ENCODE measurements at regions of chr15 and their contacts with region 1.

Region 1: DNA sequence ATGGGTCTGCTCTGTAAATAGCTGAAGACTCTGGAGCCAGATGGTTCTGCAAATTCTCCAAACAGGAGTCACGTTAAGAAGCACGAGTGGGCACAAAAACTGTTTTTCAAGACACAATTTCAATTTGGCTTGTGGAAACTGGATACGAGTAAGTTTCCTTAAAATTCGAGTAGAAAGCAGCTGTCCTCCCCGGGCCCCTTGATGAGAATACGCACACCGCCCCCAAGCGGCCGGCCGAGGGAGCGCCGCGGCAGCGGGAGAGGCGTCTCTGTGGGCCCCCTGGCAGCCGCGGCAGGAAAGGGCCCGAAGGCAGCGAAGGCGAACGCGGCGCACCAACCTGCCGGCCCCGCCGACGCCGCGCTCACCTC is 778 bp upstream of the THBS1 start:
- DNase-seq: peak; percentile 89
- H3K4me3 Mint-ChIP-seq: peak overlapping the region; percentile 42
- H3K27ac Mint-ChIP-seq: no peak overlapping the region
- H3K4me1 Mint-ChIP-seq: peaks cover 22% of the 10 kb centered on the region
- H3K27me3 Mint-ChIP-seq: peaks cover 67% of the 10 kb centered on the region

Region 2: GRCh38 chr15:39312984-39313383 is 267.1 kb before region 1 on chr15:
- CTCF ChIA-PET with region 1: no interaction called
- POLR2A ChIA-PET with region 1: no interaction called
- DNase-seq: no peak
- H3K4me3 Mint-ChIP-seq: no peak overlapping the region
- H3K27ac Mint-ChIP-seq: no peak overlapping the region
- H3K4me1 Mint-ChIP-seq: no peaks in the 10 kb centered on the region
- H3K27me3 Mint-ChIP-seq: peaks cover 10% of the 10 kb centered on the region

Region 3: GRCh38 chr15:39511000-39511915 is 68.8 kb before region 1 on chr15:
- CTCF ChIA-PET with region 1: no interaction called
- POLR2A ChIA-PET with region 1: no interaction called
- DNase-seq: no peak
- H3K4me3 Mint-ChIP-seq: no peak overlapping the region
- H3K27ac Mint-ChIP-seq: no peak overlapping the region
- H3K4me1 Mint-ChIP-seq: no peaks in the 10 kb centered on the region
- H3K27me3 Mint-ChIP-seq: peaks cover 19% of the 10 kb centered on the region

Region 4: GRCh38 chr15:39553947-39554693 is 26.0 kb before region 1 on chr15:
- CTCF ChIA-PET with region 1: no interaction called
- POLR2A ChIA-PET with region 1: no interaction called
- DNase-seq: no peak
- H3K4me3 Mint-ChIP-seq: no peak overlapping the region
- H3K27ac Mint-ChIP-seq: no peak overlapping the region
- H3K4me1 Mint-ChIP-seq: peaks cover 3% of the 10 kb centered on the region
- H3K27me3 Mint-ChIP-seq: peaks cover 11% of the 10 kb centered on the region

Region 5: GRCh38 chr15:39756806-39757522 is 176.9 kb after region 1 on chr15:
- CTCF ChIA-PET with region 1: interaction called, 12 read pairs
- POLR2A ChIA-PET with region 1: no interaction called
- DNase-seq: peak; percentile 48
- H3K4me3 Mint-ChIP-seq: no peak overlapping the region
- H3K27ac Mint-ChIP-seq: no peak overlapping the region
- H3K4me1 Mint-ChIP-seq: no peaks in the 10 kb centered on the region
- H3K27me3 Mint-ChIP-seq: peaks cover 46% of the 10 kb centered on the region

Measured in activated CD4-positive, alpha-beta T cell treated with anti-CD3 and anti-CD28 coated beads, Interleukin-2, amount 10 ng/mL, durations not matched to agents 7 days and 5 days (primary cell).